Right ventricle myocardium inferior (tissue), 1 donor: ENCODE measurements at regions of chr6 and their contacts with region 1.

Region 1: GRCh38 chr6:112004201-112005012 is 49.5 kb upstream of the CCN6 start:
- DNase-seq: no peak
- ATAC-seq: peak; percentile 70

Region 2: GRCh38 chr6:111603040-111603439 is 401.4 kb before region 1 on chr6:
- intact Hi-C with region 1: no loop called
- DNase-seq: no peak
- ATAC-seq: peak; percentile 37

Region 3: DNA sequence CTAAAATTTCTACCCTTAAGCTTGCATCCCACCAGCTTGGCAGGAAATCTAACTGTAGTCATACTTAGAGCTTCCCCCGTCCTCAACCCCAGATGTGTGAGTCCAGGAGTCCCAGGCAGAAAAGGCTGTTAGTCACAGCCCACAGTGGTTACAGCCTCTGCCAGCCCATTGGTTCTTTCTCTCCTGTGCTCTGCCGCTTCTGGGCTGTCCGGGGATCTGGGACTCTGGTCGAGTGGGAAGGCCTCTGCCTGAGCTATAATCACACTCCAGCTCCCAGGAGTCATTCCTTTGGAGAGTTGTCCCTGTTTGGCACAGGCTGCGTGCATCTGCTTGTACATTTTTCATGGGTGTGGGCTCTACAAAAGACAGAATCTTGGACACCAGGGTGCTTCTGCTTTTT is 85.6 kb before region 1 on chr6:
- intact Hi-C with region 1: no loop called
- DNase-seq: no peak
- ATAC-seq: peak; percentile 75

Region 4: GRCh38 chr6:112043032-112044007 is 38.9 kb after region 1 on chr6:
- intact Hi-C with region 1: loop called (anchors 5 kb)
- DNase-seq: peak; percentile 92
- ATAC-seq: peak; percentile 95